Naive thymus-derived CD4-positive, alpha-beta T cell (primary cell): ENCODE measurements at regions of chr3 and their contacts with region 1.

Region 1: DNA sequence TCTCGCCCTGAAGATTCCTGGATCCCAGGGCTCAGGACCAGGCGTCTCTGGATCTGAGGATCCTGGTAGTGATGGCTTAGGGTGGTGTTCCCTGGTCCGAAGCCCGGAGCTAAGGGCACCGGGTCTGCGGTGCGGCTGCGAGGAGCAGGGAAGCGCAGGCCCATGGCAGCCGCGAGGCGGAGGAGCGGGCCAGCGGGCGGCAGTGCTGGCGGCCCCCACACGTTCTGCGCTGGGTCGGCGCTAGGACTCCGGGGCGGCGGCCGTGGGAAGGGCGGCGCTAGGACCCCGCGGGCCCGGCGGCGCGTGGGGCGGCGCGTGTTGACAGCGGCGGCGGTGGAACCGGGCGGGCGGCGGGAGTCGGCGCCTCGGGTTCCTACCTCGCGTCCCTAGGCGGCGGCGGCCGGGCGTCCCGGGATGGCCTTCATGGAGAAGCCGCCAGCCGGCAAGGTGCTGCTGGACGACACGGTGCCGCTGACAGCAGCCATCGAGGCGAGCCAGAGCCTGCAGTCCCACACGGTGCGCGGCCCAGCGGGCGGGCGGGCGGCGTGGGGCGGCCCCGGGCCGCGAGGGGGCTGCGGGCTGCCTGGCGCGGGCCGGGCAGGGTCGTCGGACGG is at the start of gene PXK:
- DNase-seq: peak; percentile 63 to 89 (median 79)
- ATAC-seq: peak; percentile 94
- H3K4me3 ChIP-seq: peak within 1 kb of the TSS; percentile 68
- H3K4me3 Mint-ChIP-seq: peak within 1 kb of the TSS; percentile 83 to 100 (median 99)
- H3K27ac ChIP-seq: peak within 1 kb of the TSS; percentile 70
- H3K27ac Mint-ChIP-seq: peak within 1 kb of the TSS; percentile 65 to 97 (median 88)
- H3K4me1 ChIP-seq: peaks cover 20 to 22% of the 10 kb centered on the region in 2 donors
- H3K4me1 Mint-ChIP-seq: peaks cover 30 to 47% (median 38%) of the 10 kb centered on the region in 7 donors
- H3K27me3 ChIP-seq: no peaks in the 10 kb centered on the region
- H3K27me3 Mint-ChIP-seq: no peaks in the 10 kb centered on the region
- total RNA-seq, gene PXK: 17.3 to 38.9 (median 22.3) TPM

Region 2: DNA sequence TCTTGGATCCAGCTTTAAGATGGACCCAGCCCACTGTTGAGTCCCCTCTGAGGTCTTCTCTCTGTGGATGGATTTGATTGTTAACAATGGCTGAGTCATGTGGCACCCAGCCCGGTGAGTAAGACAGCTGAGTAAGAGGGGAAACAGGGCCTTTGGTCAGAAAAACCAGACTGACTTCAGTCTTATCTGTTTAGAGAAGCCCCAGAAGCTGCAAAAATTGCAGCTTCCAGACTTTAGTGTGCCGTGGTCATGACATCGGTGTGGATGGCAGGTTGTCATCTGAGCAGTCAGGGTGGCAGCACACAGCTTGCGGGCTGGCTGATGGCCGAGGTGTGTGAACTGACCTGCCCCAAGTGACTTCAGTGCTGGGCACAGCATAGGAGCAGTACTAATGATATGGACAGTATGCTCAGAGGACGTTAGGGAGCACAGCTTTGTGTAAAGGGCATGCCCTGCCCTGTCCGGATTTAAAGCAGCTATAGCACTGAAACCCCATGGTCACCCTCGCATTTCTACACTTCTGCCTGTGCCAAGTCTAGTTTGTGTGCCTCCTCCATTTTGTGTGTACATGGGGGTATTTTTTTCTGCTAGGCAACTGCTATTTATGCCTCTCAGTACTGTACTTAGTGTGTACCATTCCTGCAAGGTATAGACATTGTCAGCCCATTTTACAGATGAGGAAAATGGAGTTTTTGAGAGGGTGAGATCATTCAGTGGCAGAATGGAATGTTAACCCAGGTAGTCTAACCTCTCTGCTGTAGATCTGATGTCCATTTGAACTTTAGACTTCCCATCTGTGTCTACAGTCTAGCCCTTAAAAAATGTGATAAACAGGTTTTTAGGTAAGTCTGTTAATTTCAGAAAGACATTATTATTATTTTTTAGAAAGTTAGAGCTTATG is 280.1 kb before region 1 on chr3:
- CTCF ChIA-PET with region 1: no interaction called
- POLR2A ChIA-PET with region 1: no interaction called
- intact Hi-C with region 1: no loop called
- DNase-seq: peak in 1 of 9 donors; percentile 28
- ATAC-seq: peak; percentile 79
- H3K4me3 ChIP-seq: no peak overlapping the region
- H3K4me3 Mint-ChIP-seq: no peak overlapping the region
- H3K27ac ChIP-seq: no peak overlapping the region
- H3K27ac Mint-ChIP-seq: no peak overlapping the region
- H3K4me1 ChIP-seq: no peaks in the 10 kb centered on the region
- H3K4me1 Mint-ChIP-seq: peaks cover 10 to 61% (median 35%) of the 10 kb centered on the region in 7 donors
- H3K27me3 ChIP-seq: no peaks in the 10 kb centered on the region
- H3K27me3 Mint-ChIP-seq: no peaks in the 10 kb centered on the region

Region 3: GRCh38 chr3:58214484-58215316 is 118.0 kb before region 1 on chr3:
- CTCF ChIA-PET with region 1: no interaction called
- POLR2A ChIA-PET with region 1: no interaction called
- intact Hi-C with region 1: no loop called
- DNase-seq: no peak
- ATAC-seq: peak; percentile 47
- H3K4me3 ChIP-seq: no peak overlapping the region
- H3K4me3 Mint-ChIP-seq: no peak overlapping the region
- H3K27ac ChIP-seq: no peak overlapping the region
- H3K27ac Mint-ChIP-seq: peak overlapping the region in 1 of 9 donors; percentile 21
- H3K4me1 ChIP-seq: peaks cover 0 to 3% of the 10 kb centered on the region in 2 donors
- H3K4me1 Mint-ChIP-seq: peaks cover 0 to 17% (median 7%) of the 10 kb centered on the region in 7 donors
- H3K27me3 ChIP-seq: no peaks in the 10 kb centered on the region
- H3K27me3 Mint-ChIP-seq: peaks cover 4 to 18% (median 8%) of the 10 kb centered on the region in 5 donors

Region 4: DNA sequence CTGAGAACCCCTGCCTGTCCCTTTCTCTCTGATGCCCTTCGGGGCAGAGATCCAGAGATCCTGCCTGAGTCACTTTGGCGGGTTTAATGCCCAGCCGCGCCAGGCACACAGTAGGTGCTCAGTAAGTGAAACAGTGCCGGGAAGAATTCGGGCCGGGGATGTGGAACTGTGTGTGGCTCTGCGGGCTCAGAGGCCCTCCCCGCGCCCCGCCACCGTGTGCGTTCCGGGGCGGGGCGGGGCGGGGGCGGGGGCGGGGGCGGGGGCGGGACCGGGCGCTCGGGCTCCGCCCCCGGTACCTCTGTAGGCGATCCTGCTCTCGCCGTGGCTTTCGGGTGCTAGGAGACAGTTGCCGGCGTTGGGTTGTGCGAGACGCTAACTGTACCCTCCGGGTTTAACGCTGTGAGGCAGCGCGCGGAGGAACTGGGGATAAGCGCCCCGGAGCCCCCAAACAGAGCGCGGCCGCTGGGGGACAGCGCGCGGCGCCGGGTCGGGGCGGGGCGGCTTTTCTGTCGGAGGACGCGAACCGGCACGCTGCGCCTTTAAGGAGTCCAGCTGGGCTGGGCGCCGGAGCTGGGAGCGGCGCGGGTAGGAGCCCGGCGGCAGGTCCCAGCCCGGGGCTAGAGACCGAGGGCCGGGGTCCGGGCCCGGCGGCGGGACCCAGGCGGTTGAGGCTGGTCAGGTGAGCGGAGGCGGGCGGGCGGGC is 95.3 kb before region 1 on chr3 and contains the start of gene ABHD6:
- CTCF ChIA-PET with region 1: no interaction called
- POLR2A ChIA-PET with region 1: no interaction called
- intact Hi-C with region 1: loop called in 1 of 2 experiments (anchors 1 kb)
- DNase-seq: peak; percentile 58 to 95 (median 86)
- ATAC-seq: peak; percentile 91
- H3K4me3 ChIP-seq: peak within 1 kb of the TSS; percentile 86
- H3K4me3 Mint-ChIP-seq: peak within 1 kb of the TSS; percentile 84 to 98 (median 92)
- H3K27ac ChIP-seq: peak within 1 kb of the TSS; percentile 72
- H3K27ac Mint-ChIP-seq: peak within 1 kb of the TSS; percentile 50 to 87 (median 81)
- H3K4me1 ChIP-seq: peaks cover 6 to 12% of the 10 kb centered on the region in 2 donors
- H3K4me1 Mint-ChIP-seq: peaks cover 9 to 18% (median 13%) of the 10 kb centered on the region in 7 donors
- H3K27me3 ChIP-seq: no peaks in the 10 kb centered on the region
- H3K27me3 Mint-ChIP-seq: peaks cover 0 to 29% (median 13%) of the 10 kb centered on the region in 5 donors
- total RNA-seq, gene ABHD6: 3.1 to 7.3 (median 6.6) TPM

Region 5: DNA sequence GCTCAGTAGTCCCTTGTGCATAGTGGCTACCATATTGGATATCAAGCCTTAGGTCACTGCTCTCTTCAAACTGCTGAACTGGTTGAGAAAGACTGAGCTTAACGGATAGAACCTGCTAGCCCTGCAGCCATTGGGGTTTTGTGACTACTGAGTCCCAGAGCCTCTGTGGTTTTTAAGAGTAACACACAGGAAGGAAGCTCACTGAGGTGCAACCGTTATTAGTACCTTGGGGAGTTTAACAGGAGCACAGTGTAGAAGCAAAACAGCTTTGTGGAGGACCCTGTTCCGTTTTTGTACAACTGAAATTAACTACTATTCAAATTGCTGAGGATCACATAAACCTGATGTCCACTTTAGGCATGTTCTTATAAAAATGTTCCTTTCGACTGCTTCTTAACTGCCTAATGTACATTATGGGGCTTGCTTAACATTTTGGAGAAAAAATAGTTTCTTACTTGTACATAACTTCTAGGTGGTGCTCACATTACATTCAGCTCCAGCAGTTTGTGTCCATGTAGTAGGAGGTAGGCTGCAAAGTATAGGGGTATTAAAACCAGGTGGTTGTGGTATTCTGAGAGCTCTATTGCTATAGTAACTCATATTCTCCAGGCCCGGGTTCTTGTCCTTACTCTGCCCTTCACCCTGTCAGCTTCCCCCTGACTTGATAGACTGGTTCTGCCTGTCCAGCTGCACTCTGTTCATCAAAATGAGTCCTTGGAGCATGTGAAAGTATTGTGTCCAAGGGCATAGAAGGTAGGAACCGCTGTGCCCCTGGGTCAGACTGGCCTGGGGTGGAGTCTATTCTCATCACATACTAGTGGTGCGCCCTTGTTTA is 17.3 kb after region 1 on chr3:
- CTCF ChIA-PET with region 1: interaction called, 3 read pairs
- POLR2A ChIA-PET with region 1: no interaction called
- intact Hi-C with region 1: loop called in 1 of 2 experiments (anchors 1 kb)
- DNase-seq: no peak
- ATAC-seq: peak; percentile 33
- H3K4me3 ChIP-seq: no peak overlapping the region
- H3K4me3 Mint-ChIP-seq: peak overlapping the region in 3 of 10 donors; percentile 1 to 67 (median 20)
- H3K27ac ChIP-seq: no peak overlapping the region
- H3K27ac Mint-ChIP-seq: peak overlapping the region in 2 of 9 donors; percentile 30 to 87
- H3K4me1 ChIP-seq: peaks cover 4 to 10% of the 10 kb centered on the region in 2 donors
- H3K4me1 Mint-ChIP-seq: peaks cover 44 to 84% (median 49%) of the 10 kb centered on the region in 7 donors
- H3K27me3 ChIP-seq: no peaks in the 10 kb centered on the region
- H3K27me3 Mint-ChIP-seq: no peaks in the 10 kb centered on the region

Region 6: GRCh38 chr3:58471025-58471887 is 138.6 kb after region 1 on chr3:
- CTCF ChIA-PET with region 1: no interaction called
- POLR2A ChIA-PET with region 1: no interaction called
- intact Hi-C with region 1: loop called in 1 of 2 experiments (anchors 5 kb)
- DNase-seq: peak in 1 of 9 donors; percentile 60
- ATAC-seq: peak; percentile 93
- H3K4me3 ChIP-seq: peak overlapping the region; percentile 19
- H3K4me3 Mint-ChIP-seq: peak overlapping the region in 2 of 10 donors; percentile 5 to 64
- H3K27ac ChIP-seq: no peak overlapping the region
- H3K27ac Mint-ChIP-seq: peak overlapping the region in 5 of 9 donors; percentile 53 to 89 (median 74)
- H3K4me1 ChIP-seq: peaks cover 0 to 28% of the 10 kb centered on the region in 2 donors
- H3K4me1 Mint-ChIP-seq: peaks cover 5 to 64% (median 22%) of the 10 kb centered on the region in 7 donors
- H3K27me3 ChIP-seq: no peaks in the 10 kb centered on the region
- H3K27me3 Mint-ChIP-seq: peaks cover 0 to 2% (median 0%) of the 10 kb centered on the region in 5 donors

Region 7: GRCh38 chr3:58544541-58544940 is 211.9 kb after region 1 on chr3:
- CTCF ChIA-PET with region 1: no interaction called
- POLR2A ChIA-PET with region 1: no interaction called
- intact Hi-C with region 1: no loop called
- DNase-seq: no peak
- ATAC-seq: no peak
- H3K4me3 ChIP-seq: no peak overlapping the region
- H3K4me3 Mint-ChIP-seq: no peak overlapping the region
- H3K27ac ChIP-seq: no peak overlapping the region
- H3K27ac Mint-ChIP-seq: no peak overlapping the region
- H3K4me1 ChIP-seq: no peaks in the 10 kb centered on the region
- H3K4me1 Mint-ChIP-seq: no peaks in the 10 kb centered on the region
- H3K27me3 ChIP-seq: no peaks in the 10 kb centered on the region
- H3K27me3 Mint-ChIP-seq: peaks cover 0 to 41% (median 0%) of the 10 kb centered on the region in 5 donors

Region 8: GRCh38 chr3:58640700-58641372 is 308.2 kb after region 1 on chr3:
- CTCF ChIA-PET with region 1: interaction called, 13 read pairs
- POLR2A ChIA-PET with region 1: no interaction called
- intact Hi-C with region 1: no loop called
- DNase-seq: peak in 7 of 9 donors; percentile 14 to 60 (median 25)
- ATAC-seq: peak; percentile 73
- H3K4me3 ChIP-seq: no peak overlapping the region
- H3K4me3 Mint-ChIP-seq: no peak overlapping the region
- H3K27ac ChIP-seq: no peak overlapping the region
- H3K27ac Mint-ChIP-seq: no peak overlapping the region
- H3K4me1 ChIP-seq: no peaks in the 10 kb centered on the region
- H3K4me1 Mint-ChIP-seq: peaks cover 0 to 3% (median 0%) of the 10 kb centered on the region in 7 donors
- H3K27me3 ChIP-seq: no peaks in the 10 kb centered on the region
- H3K27me3 Mint-ChIP-seq: peaks cover 0 to 7% (median 0%) of the 10 kb centered on the region in 5 donors